Activated naive CD4-positive, alpha-beta T cell treated with anti-CD3 and anti-CD28 coated beads for 36 hours (primary cell): ENCODE measurements at regions of chr2 and their contacts with region 1.

Region 1: GRCh38 chr2:241859436-241860183 is 916 bp upstream of the PDCD1 start:
- DNase-seq: peak; percentile 86
- H3K4me3 Mint-ChIP-seq: peak overlapping the region; percentile 76
- H3K27ac Mint-ChIP-seq: peak overlapping the region; percentile 95
- H3K4me1 Mint-ChIP-seq: peaks cover 69% of the 10 kb centered on the region
- H3K27me3 Mint-ChIP-seq: peaks cover 11% of the 10 kb centered on the region

Region 2: GRCh38 chr2:240739797-240740196 is 1119.8 kb before region 1 on chr2:
- CTCF ChIA-PET with region 1: no interaction called
- intact Hi-C with region 1: no loop called
- DNase-seq: peak; percentile 28
- H3K4me3 Mint-ChIP-seq: no peak overlapping the region
- H3K27ac Mint-ChIP-seq: peak overlapping the region; percentile 63
- H3K4me1 Mint-ChIP-seq: peaks cover 9% of the 10 kb centered on the region
- H3K27me3 Mint-ChIP-seq: no peaks in the 10 kb centered on the region

Region 3: DNA sequence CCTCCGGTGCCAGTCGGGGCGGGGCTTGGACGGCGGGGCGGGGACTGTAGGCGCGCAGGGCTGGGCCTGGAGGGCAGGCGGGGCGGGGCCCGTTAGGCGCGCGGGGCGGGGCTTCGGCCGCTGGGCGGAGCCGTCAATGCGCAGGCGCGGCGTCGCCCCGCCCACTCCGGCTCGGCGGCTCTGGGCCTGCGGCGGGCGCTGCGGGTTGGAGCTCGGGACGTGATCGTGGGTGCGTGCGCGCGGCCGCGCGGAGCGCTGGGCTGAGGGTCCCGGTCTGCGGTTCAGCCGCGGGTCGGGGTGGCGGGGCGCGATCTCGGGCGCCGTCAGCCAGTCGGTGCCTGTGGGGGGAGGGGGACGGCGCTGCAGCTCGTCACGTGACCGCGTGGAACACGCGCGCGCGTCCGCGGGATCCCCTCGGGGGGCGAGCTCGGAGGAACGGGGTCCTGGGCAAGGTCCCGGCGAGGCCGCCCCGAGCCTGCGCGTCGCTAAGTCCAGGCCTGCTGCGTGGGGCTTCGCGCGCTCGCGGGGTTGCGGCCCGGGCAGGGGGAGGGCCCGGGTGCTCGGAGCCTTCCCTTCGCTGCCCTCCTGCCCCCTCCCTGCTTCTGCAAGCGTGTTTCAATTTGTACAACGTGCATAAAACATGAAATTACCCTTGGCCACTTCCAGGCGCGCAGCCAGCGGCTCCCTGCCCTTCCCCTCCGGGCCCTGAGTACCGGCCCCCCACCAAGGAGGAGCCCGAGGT is 125.0 kb before region 1 on chr2 and contains the start of gene D2HGDH:
- CTCF ChIA-PET with region 1: interaction called, 3 read pairs
- intact Hi-C with region 1: loop called (anchors 1 kb)
- DNase-seq: peak; percentile 95
- H3K4me3 Mint-ChIP-seq: peak within 1 kb of the TSS; percentile 78
- H3K27ac Mint-ChIP-seq: no peak within 1 kb of the TSS
- H3K4me1 Mint-ChIP-seq: peaks cover 52% of the 10 kb centered on the region
- H3K27me3 Mint-ChIP-seq: no peaks in the 10 kb centered on the region
- total RNA-seq, gene D2HGDH: 19.4 to 23.1 TPM

Region 4: DNA sequence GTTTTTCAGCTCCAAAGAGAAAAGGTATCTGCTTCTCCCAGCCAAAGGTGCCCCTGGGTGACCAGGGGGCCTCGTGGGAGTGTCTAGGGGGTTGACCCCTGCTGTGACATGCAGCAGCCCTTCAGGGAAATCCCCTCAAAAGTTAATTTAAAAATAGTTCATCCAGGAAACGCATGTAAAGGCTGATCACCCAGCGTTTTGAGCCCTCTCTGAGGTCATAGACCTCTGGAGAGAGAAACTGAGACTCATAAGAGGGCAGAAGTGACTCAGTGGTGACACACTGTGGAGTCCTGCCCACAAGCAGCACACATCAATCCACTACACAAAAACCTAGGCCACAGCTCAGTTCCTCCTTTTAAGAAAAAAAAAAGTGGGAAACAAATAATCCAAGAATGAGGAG is 71.0 kb before region 1 on chr2:
- CTCF ChIA-PET with region 1: no interaction called
- intact Hi-C with region 1: loop called (anchors 1 kb)
- DNase-seq: peak; percentile 75
- H3K4me3 Mint-ChIP-seq: no peak overlapping the region
- H3K27ac Mint-ChIP-seq: peak overlapping the region; percentile 21
- H3K4me1 Mint-ChIP-seq: peaks cover 21% of the 10 kb centered on the region
- H3K27me3 Mint-ChIP-seq: peaks cover 7% of the 10 kb centered on the region

Region 5: GRCh38 chr2:241803387-241804325 is 56.0 kb before region 1 on chr2:
- CTCF ChIA-PET with region 1: no interaction called
- intact Hi-C with region 1: loop called (anchors 5 kb)
- DNase-seq: peak; percentile 35
- H3K4me3 Mint-ChIP-seq: peak overlapping the region; percentile 48
- H3K27ac Mint-ChIP-seq: no peak overlapping the region
- H3K4me1 Mint-ChIP-seq: peaks cover 12% of the 10 kb centered on the region
- H3K27me3 Mint-ChIP-seq: peaks cover 8% of the 10 kb centered on the region

Region 6: DNA sequence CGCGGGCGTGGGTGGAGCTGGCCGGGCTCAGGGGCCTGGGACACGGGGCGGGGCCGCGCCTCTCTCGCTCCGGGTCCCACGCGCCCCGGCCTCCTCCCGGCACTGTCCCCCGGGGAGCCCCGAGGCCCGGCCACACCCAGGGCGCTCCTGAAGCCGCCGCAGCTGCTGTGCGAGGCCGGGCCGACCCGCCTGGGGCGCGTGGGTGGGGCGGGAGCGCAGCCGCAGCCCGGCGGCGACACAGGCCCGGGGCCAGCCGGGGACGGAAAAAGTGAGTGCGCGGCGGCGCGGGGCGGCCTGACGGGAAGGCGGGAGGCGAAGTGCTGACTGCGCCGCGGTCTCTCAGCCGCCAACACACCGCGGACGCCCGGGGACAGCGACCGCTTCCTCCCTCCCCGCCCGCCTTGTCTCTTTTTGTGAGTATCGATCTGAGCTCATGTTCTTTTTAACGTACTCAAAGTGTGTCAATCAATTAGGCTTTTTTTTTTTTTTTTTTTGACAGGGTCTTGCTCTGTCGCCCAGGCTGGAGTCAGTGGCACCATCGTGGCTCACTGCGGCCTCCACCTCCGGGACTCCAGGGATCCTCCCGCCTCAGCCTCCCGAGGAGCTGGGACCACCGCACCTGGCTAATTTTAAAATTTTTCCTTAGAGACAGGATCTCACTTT is 15.4 kb before region 1 on chr2:
- CTCF ChIA-PET with region 1: interaction called, 4 read pairs
- intact Hi-C with region 1: loop called (anchors 1 kb)
- DNase-seq: peak; percentile 90
- H3K4me3 Mint-ChIP-seq: peak overlapping the region; percentile 56
- H3K27ac Mint-ChIP-seq: peak overlapping the region; percentile 74
- H3K4me1 Mint-ChIP-seq: peaks cover 37% of the 10 kb centered on the region
- H3K27me3 Mint-ChIP-seq: peaks cover 6% of the 10 kb centered on the region

Region 7: GRCh38 chr2:241895712-241896641 is 36.4 kb after region 1 on chr2:
- CTCF ChIA-PET with region 1: no interaction called
- intact Hi-C with region 1: no loop called
- DNase-seq: peak; percentile 4
- H3K4me3 Mint-ChIP-seq: no peak overlapping the region
- H3K27ac Mint-ChIP-seq: peak overlapping the region; percentile 65
- H3K4me1 Mint-ChIP-seq: peaks cover 5% of the 10 kb centered on the region
- H3K27me3 Mint-ChIP-seq: no peaks in the 10 kb centered on the region